ENCODE measurements at regions of chr12 and their contacts with region 1.

Region 1: GRCh38 chr12:64551698-64552097 is 58.6 kb upstream of the RASSF3 start:
- DNase-seq: no peak
- H3K4me3 Mint-ChIP-seq: no peak overlapping the region
- H3K27ac Mint-ChIP-seq: no peak overlapping the region
- H3K4me1 Mint-ChIP-seq: peaks cover 4% of the 10 kb centered on the region
- H3K27me3 Mint-ChIP-seq: peaks cover 7% of the 10 kb centered on the region

Region 2: DNA sequence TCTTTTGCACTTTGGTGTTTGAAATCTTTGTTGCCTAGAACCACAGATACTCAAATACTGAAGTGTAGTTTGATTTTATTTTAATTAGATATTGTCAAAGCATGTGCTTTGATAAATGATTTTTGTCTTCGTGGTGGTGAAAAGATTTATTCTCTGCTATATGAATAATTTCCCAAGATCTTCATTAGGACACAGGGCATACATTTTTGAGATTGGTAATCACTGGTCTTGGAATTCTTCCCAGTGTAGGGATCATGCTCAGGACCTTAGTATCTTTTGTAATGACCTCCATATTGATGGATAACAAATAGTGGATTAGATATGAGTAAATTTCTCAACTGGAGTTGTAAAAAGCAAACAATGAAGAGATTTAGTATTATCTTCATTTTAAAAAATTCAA is 71.5 kb before region 1 on chr12:
- CTCF ChIA-PET with region 1: no interaction called
- POLR2A ChIA-PET with region 1: no interaction called
- DNase-seq: no peak
- H3K4me3 Mint-ChIP-seq: no peak overlapping the region
- H3K27ac Mint-ChIP-seq: no peak overlapping the region
- H3K4me1 Mint-ChIP-seq: peaks cover 2% of the 10 kb centered on the region
- H3K27me3 Mint-ChIP-seq: no peaks in the 10 kb centered on the region

Region 3: GRCh38 chr12:64538121-64538520 is 13.6 kb before region 1 on chr12:
- CTCF ChIA-PET with region 1: interaction called, 14 read pairs
- POLR2A ChIA-PET with region 1: no interaction called
- DNase-seq: no peak
- H3K4me3 Mint-ChIP-seq: no peak overlapping the region
- H3K27ac Mint-ChIP-seq: no peak overlapping the region
- H3K4me1 Mint-ChIP-seq: no peaks in the 10 kb centered on the region
- H3K27me3 Mint-ChIP-seq: peaks cover 12% of the 10 kb centered on the region

Region 4: DNA sequence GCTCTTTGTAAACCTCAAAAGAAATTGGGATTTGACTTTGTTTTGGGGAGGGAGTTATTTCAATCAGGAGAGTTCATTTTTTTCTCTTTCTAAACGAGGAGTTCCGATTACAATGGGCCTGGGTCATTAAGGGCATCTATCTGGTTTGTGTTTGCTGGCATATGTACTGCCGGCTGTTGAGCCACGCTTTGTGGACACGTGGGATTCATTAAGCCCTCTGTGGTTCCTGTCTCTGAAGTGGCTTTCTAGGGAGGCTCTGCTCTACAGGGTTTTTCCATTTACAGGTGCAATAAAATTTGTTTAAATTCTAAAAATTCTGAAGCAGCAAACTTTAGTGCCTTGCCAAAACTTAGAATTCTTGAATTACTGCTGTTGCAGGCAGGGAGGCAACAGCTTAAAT is 149.6 kb after region 1 on chr12:
- CTCF ChIA-PET with region 1: interaction called, 118 read pairs
- POLR2A ChIA-PET with region 1: interaction called, 6 read pairs
- DNase-seq: no peak
- H3K4me3 Mint-ChIP-seq: no peak overlapping the region
- H3K27ac Mint-ChIP-seq: peak overlapping the region; percentile 69
- H3K4me1 Mint-ChIP-seq: peaks cover 39% of the 10 kb centered on the region
- H3K27me3 Mint-ChIP-seq: no peaks in the 10 kb centered on the region

Region 5: GRCh38 chr12:64716839-64717455 is 165.2 kb after region 1 on chr12:
- CTCF ChIA-PET with region 1: interaction called, 14 read pairs
- POLR2A ChIA-PET with region 1: no interaction called
- DNase-seq: no peak
- H3K4me3 Mint-ChIP-seq: no peak overlapping the region
- H3K27ac Mint-ChIP-seq: no peak overlapping the region
- H3K4me1 Mint-ChIP-seq: peaks cover 40% of the 10 kb centered on the region
- H3K27me3 Mint-ChIP-seq: no peaks in the 10 kb centered on the region